T-cell (primary cell): ENCODE measurements at regions of chr3 and their contacts with region 1.

Region 1: DNA sequence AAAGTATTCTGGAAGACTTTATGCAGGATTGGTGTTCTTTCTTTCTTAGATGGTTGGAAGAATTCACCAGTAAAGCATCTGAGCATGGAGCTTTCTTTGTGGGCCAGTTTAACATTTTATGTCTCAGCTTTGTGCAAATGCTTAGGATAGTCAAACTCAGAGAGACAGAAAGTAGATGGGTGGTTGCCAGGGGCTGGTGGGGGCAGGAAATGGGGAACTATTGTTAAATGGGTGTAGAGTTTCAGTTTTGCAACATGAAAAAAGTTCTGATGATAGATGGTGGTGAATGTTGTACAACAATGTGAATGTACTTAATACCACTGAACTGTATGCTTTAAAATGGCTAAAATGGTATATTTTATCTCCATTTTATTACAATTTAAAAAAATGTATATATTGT is 24.8 kb downstream of the SPCS1 start:
- DNase-seq: no peak
- ATAC-seq: no peak
- H3K4me3 ChIP-seq: no peak overlapping the region
- H3K4me3 Mint-ChIP-seq: no peak overlapping the region
- H3K27ac ChIP-seq: no peak overlapping the region
- H3K27ac Mint-ChIP-seq: peak overlapping the region; percentile 1 to 41
- H3K4me1 ChIP-seq: no peaks in the 10 kb centered on the region
- H3K4me1 Mint-ChIP-seq: peaks cover 6 to 8% (median 7%) of the 10 kb centered on the region in 3 donors
- H3K27me3 ChIP-seq: no peaks in the 10 kb centered on the region
- H3K27me3 Mint-ChIP-seq: no peaks in the 10 kb centered on the region

Region 2: DNA sequence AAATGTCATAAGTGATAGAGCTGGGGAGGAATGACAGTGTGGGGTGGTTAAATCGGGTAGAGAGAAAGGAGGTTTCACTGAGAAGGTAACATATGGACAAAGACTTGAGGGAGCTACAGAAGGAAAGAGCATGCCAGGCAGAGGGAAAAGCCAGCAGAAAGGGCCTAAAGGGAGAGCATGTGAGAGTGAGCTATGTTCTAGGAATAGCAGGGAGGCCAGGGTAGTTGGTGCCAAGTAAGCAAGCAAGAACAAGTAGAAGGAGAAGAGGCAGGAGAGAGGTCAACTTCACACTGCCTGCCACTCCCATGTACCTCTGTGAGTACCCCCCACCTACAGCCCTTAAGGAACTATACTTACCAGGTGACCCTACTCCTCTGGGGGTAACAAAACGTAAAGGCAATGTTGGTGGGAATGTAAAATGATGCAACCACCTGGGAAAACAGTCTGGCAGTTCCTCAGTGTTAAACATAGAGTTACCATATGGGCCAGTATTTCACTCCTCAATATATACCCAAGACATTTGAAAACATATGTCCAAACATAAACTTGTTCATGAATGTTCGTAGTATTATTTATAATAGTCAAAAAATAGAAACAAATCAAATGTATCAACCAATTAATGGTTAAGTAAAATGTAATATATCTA is 247.6 kb after region 1 on chr3:
- CTCF ChIA-PET with region 1: no interaction called
- POLR2A ChIA-PET with region 1: interaction called in 1 of 2 experiments, 10 read pairs
- DNase-seq: no peak
- ATAC-seq: no peak
- H3K4me3 ChIP-seq: no peak overlapping the region
- H3K4me3 Mint-ChIP-seq: no peak overlapping the region
- H3K27ac ChIP-seq: no peak overlapping the region
- H3K27ac Mint-ChIP-seq: peak overlapping the region; percentile 18 to 24
- H3K4me1 ChIP-seq: peaks cover 3 to 7% of the 10 kb centered on the region in 2 experiments
- H3K4me1 Mint-ChIP-seq: peaks cover 42 to 48% (median 43%) of the 10 kb centered on the region in 3 donors
- H3K27me3 ChIP-seq: no peaks in the 10 kb centered on the region
- H3K27me3 Mint-ChIP-seq: no peaks in the 10 kb centered on the region